Activated CD4-positive, alpha-beta T cell treated with anti-CD3 and anti-CD28 coated beads, Interleukin-2, amount 10 ng/mL, durations not matched to agents 24 days and 14 days (primary cell): ENCODE measurements at regions of chr1 and their contacts with region 1.

Region 1: GRCh38 chr1:19209990-19210771 is at the start of gene UBR4:
- DNase-seq: peak; percentile 99
- H3K4me3 Mint-ChIP-seq: peak within 1 kb of the TSS; percentile 97
- H3K27ac Mint-ChIP-seq: peak within 1 kb of the TSS; percentile 94
- H3K4me1 Mint-ChIP-seq: peaks cover 51% of the 10 kb centered on the region
- H3K27me3 Mint-ChIP-seq: no peaks in the 10 kb centered on the region
- total RNA-seq, gene UBR4: 145 and 162 TPM in 2 replicates

Region 2: GRCh38 chr1:18840145-18840544 is 370.0 kb before region 1 on chr1:
- intact Hi-C with region 1: no loop called
- DNase-seq: no peak
- H3K4me3 Mint-ChIP-seq: no peak overlapping the region
- H3K27ac Mint-ChIP-seq: no peak overlapping the region
- H3K4me1 Mint-ChIP-seq: no peaks in the 10 kb centered on the region
- H3K27me3 Mint-ChIP-seq: no peaks in the 10 kb centered on the region

Region 3: GRCh38 chr1:18949686-18950400 is 260.3 kb before region 1 on chr1:
- intact Hi-C with region 1: loop called (anchors 5 kb)
- DNase-seq: peak; percentile 76
- H3K4me3 Mint-ChIP-seq: peak overlapping the region; percentile 78
- H3K27ac Mint-ChIP-seq: peak overlapping the region; percentile 98
- H3K4me1 Mint-ChIP-seq: peaks cover 90% of the 10 kb centered on the region
- H3K27me3 Mint-ChIP-seq: no peaks in the 10 kb centered on the region

Region 4: GRCh38 chr1:19169642-19170041 is 40.5 kb before region 1 on chr1:
- intact Hi-C with region 1: loop called (anchors 5 kb)
- DNase-seq: no peak
- H3K4me3 Mint-ChIP-seq: peak overlapping the region; percentile 12
- H3K27ac Mint-ChIP-seq: peak overlapping the region; percentile 71
- H3K4me1 Mint-ChIP-seq: peaks cover 13% of the 10 kb centered on the region
- H3K27me3 Mint-ChIP-seq: no peaks in the 10 kb centered on the region

Region 5: GRCh38 chr1:19232526-19232851 is 22.3 kb after region 1 on chr1:
- intact Hi-C with region 1: no loop called
- DNase-seq: no peak
- H3K4me3 Mint-ChIP-seq: no peak overlapping the region
- H3K27ac Mint-ChIP-seq: no peak overlapping the region
- H3K4me1 Mint-ChIP-seq: no peaks in the 10 kb centered on the region
- H3K27me3 Mint-ChIP-seq: no peaks in the 10 kb centered on the region

Region 6: GRCh38 chr1:19430121-19431068 is 220.2 kb after region 1 on chr1:
- intact Hi-C with region 1: no loop called
- DNase-seq: no peak
- H3K4me3 Mint-ChIP-seq: peak overlapping the region; percentile 24
- H3K27ac Mint-ChIP-seq: peak overlapping the region; percentile 64
- H3K4me1 Mint-ChIP-seq: peaks cover 50% of the 10 kb centered on the region
- H3K27me3 Mint-ChIP-seq: no peaks in the 10 kb centered on the region